HCT116 (cell line): ENCODE measurements at regions of chr17 and their contacts with region 1.

Region 1: GRCh38 chr17:17836250-17836817 is 452 bp downstream of the SREBF1 start:
- DNase-seq: peak; percentile 92
- ATAC-seq: peak; percentile 70
- H3K4me3 ChIP-seq: peak overlapping the region; percentile 78 to 84
- H3K27ac ChIP-seq: peak overlapping the region; percentile 98
- H3K4me1 ChIP-seq: peaks cover 55 to 84% of the 10 kb centered on the region in 2 experiments
- H3K27me3 ChIP-seq: no peaks in the 10 kb centered on the region
- CTCF ChIP-seq: no peak
- POLR2A ChIP-seq: peak; percentile 97
- RAD21 ChIP-seq: peak; percentile 15; the same call in 1 of the 2 replicates

Region 2: DNA sequence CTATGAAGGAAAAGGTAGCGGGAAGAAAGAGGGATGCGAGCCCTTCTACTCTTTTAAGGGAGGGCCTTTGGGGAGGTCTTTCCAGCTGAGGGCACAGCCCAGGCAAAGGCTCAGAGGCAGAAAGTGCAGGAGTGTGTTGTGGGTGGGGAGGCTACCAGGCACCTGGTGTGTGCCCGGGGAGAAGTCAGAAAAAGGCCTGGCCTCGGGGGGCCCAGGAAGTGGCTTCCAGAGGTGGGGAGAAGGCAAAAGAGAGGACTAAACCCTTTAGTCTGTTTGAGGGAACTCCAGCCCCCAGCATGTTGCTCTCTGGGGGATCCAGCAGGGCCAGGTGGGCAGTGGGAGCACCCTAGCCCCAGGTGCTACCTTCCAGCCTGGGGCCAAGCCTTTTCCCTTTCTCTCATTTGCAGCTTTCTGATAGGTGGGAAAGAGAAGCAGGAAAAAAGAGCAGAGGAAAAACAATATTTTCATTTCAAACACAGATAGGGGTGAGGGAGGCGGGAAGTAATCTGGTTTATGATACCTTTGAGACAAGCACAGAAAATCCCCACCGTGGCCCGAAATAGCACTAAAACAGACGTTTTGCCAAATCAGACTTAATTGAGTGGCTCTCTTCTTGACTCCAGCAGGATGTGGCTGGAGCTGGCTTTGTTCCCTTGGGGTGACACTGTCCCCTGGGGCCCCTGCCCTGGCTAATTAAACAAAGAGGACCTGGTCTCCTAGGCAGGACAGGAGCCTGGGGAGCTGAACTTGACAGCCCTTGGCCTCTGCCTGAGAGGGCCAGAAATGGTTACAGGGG is 144.7 kb before region 1 on chr17:
- CTCF ChIA-PET with region 1: no interaction called
- POLR2A ChIA-PET with region 1: interaction called, 11 read pairs
- RAD21 ChIA-PET with region 1: no interaction called
- intact Hi-C with region 1: loop called (anchors 10 kb)
- DNase-seq: no peak
- ATAC-seq: no peak
- H3K4me3 ChIP-seq: no peak overlapping the region
- H3K27ac ChIP-seq: peak overlapping the region; percentile 94
- H3K4me1 ChIP-seq: peaks cover 83 to 96% of the 10 kb centered on the region in 2 experiments
- H3K27me3 ChIP-seq: no peaks in the 10 kb centered on the region
- CTCF ChIP-seq: no peak
- POLR2A ChIP-seq: no peak
- RAD21 ChIP-seq: no peak

Region 3: DNA sequence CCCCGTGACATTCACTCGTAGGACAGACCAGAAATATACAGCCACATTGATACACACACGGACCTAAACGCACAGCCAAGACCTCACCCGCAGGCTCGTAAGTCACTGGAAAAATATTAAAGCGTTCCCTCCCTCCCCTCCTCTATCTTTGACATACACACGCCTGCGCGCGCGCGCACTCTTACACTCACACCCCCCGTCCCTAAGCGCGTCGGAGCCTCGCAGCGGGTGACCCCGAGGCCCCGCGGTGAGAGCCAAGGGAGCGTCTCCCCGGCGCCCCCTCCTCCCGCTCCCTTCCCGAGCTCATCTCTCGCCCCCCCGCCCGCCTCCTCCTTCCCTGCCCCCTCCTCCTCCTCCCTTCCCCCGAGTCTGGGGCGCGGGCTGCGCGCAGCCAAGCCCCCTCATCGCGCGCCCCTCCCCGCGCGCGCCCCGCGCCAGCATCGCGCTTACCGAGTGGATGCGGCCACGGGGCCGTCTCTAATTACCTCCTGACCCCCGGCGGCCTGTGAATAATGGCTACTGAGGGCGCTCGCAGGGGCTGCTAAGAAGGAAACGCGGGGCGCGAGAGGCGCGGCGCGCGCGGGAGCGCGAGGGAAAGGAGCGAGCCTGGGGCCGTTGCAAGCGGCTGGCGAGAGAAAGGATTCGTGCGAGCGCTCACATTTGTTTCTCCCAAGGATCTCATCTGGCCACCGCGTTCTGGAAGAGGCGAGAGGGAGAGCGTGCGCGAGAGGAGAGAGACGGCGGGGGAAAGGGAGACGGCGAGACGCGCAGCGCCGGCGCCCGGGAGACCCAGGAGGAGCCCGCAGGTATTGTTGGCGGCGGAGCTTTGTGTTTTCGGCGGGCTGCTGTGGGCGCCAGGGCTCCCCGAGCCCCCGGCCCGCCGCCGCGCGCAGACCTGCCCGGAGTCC is 112.7 kb before region 1 on chr17:
- CTCF ChIA-PET with region 1: no interaction called
- POLR2A ChIA-PET with region 1: no interaction called
- RAD21 ChIA-PET with region 1: no interaction called
- intact Hi-C with region 1: no loop called
- DNase-seq: no peak
- ATAC-seq: no peak
- H3K4me3 ChIP-seq: no peak overlapping the region
- H3K27ac ChIP-seq: no peak overlapping the region
- H3K4me1 ChIP-seq: peaks cover 17 to 41% of the 10 kb centered on the region in 2 experiments
- H3K27me3 ChIP-seq: no peaks in the 10 kb centered on the region
- CTCF ChIP-seq: no peak
- POLR2A ChIP-seq: no peak
- RAD21 ChIP-seq: no peak

Region 4: GRCh38 chr17:17781591-17782496 is 54.5 kb before region 1 on chr17:
- CTCF ChIA-PET with region 1: no interaction called
- POLR2A ChIA-PET with region 1: no interaction called
- RAD21 ChIA-PET with region 1: no interaction called
- intact Hi-C with region 1: no loop called
- DNase-seq: no peak
- ATAC-seq: peak; percentile 44
- H3K4me3 ChIP-seq: peak overlapping the region; percentile 41 to 61
- H3K27ac ChIP-seq: peak overlapping the region; percentile 80
- H3K4me1 ChIP-seq: peaks cover 45 to 72% of the 10 kb centered on the region in 2 experiments
- H3K27me3 ChIP-seq: no peaks in the 10 kb centered on the region
- CTCF ChIP-seq: no peak
- POLR2A ChIP-seq: no peak
- RAD21 ChIP-seq: no peak

Region 5: DNA sequence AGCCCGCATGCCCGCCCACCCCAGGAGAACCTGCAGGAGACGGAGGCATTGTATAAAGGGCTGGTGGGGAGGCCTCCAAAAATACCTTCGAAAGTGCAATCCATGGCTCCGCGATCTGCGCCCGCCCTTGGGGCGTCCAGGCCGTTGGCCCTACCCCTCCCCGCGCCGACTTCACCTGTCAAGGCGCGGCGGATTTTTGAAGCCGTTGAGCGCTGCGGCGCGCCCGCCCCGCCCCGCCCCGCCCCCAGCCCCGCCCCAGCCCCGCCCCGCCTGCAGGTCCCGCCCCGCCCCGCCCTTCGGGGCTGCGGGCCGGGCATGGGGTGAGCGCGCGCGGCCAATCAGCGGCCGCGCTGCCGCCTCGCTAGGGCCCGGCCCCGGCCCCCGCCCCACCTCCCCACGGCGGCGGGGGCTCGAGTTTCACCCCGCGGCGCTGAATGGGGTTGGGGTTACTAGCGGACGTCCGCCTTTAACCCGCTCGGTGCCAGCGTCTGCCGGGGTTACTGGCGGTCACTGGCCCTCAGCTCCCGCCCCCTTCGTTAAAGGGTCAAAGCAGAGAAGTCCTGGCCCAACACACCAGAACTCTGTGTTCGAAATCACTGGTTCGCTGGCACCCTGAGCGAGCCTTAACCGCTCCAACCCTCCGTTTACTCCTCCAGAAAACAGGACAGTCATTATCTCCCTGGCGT is 12.8 kb before region 1 on chr17:
- CTCF ChIA-PET with region 1: interaction called, 8 read pairs
- POLR2A ChIA-PET with region 1: interaction called, 112 read pairs
- RAD21 ChIA-PET with region 1: interaction called in 1 of 2 experiments, 3 read pairs
- intact Hi-C with region 1: no loop called
- DNase-seq: peak; percentile 56
- ATAC-seq: peak; percentile 84
- H3K4me3 ChIP-seq: peak overlapping the region; percentile 55 to 57
- H3K27ac ChIP-seq: peak overlapping the region; percentile 98
- H3K4me1 ChIP-seq: peaks cover 94 to 98% of the 10 kb centered on the region in 2 experiments
- H3K27me3 ChIP-seq: no peaks in the 10 kb centered on the region
- CTCF ChIP-seq: no peak
- POLR2A ChIP-seq: no peak
- RAD21 ChIP-seq: no peak

Region 6: DNA sequence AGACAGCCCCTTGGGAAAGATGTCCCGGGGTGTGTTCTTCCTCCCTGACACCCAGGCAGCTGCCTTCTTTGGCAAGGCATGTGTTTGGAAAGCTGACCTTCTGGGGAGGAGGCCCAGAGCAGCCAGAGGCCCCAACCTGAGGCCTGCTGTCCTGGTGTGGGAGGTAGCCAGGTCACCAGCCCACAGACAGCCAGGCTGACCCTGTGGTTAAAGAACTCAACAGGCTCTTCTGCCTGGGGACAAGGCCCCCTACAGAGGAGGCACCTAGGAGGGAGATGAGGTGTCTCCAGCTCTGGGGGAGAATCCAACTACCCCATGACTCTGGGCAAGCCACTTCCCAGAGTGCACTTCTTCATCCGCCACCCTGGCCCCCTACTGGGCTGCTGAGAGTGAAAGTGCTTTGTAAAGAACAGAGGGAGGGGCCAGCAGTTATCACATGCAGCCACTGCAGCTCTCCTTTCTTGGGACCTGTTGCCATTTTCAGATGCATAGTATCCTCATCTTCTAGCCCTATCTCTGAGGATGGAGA is 13.6 kb after region 1 on chr17:
- CTCF ChIA-PET with region 1: no interaction called
- POLR2A ChIA-PET with region 1: interaction called, 17 read pairs
- RAD21 ChIA-PET with region 1: interaction called in 1 of 2 experiments, 3 read pairs
- intact Hi-C with region 1: no loop called
- DNase-seq: no peak
- ATAC-seq: peak; percentile 82
- H3K4me3 ChIP-seq: no peak overlapping the region
- H3K27ac ChIP-seq: peak overlapping the region; percentile 80
- H3K4me1 ChIP-seq: peaks cover 35 to 50% of the 10 kb centered on the region in 2 experiments
- H3K27me3 ChIP-seq: no peaks in the 10 kb centered on the region
- CTCF ChIP-seq: peak in 2 of 3 experiments; percentile 25 to 37; a peak in 2 of 6 replicates
- POLR2A ChIP-seq: no peak
- RAD21 ChIP-seq: no peak